ENCODE measurements at regions of chr5 and their contacts with region 1.

Region 1: GRCh38 chr5:64612344-64612961 is 77.8 kb upstream of the SHISAL2B start:
- DNase-seq: peak; percentile 71
- H3K4me3 Mint-ChIP-seq: no peak overlapping the region
- H3K27ac Mint-ChIP-seq: no peak overlapping the region
- H3K4me1 Mint-ChIP-seq: no peaks in the 10 kb centered on the region
- H3K27me3 Mint-ChIP-seq: peaks cover 33% of the 10 kb centered on the region
- CTCF ChIP-seq: peak; percentile 75

Region 2: DNA sequence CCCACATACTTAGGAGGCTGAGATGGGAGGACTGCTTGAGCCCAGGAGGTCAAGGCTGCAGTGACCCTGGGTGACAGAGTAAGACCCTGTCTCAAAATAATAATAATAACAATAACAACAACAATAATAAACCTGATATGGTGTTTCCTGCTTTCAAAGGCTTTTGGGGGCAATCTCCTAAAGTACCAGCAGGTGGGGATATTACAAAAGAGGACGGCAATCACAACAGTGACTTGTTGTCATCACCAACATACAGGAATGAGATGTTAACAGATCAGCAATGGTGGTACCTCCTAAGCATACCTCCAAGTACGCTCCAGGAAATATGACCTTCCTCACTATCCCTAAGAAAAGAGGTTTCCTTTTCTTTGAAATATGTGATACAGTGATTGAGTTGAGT is 537.9 kb before region 1 on chr5:
- CTCF ChIA-PET with region 1: interaction called, 4 read pairs
- POLR2A ChIA-PET with region 1: no interaction called
- intact Hi-C with region 1: loop called (anchors 1 kb)
- DNase-seq: peak; percentile 53
- H3K4me3 Mint-ChIP-seq: no peak overlapping the region
- H3K27ac Mint-ChIP-seq: no peak overlapping the region
- H3K4me1 Mint-ChIP-seq: no peaks in the 10 kb centered on the region
- H3K27me3 Mint-ChIP-seq: peaks cover 15% of the 10 kb centered on the region
- CTCF ChIP-seq: peak; percentile 62

Region 3: DNA sequence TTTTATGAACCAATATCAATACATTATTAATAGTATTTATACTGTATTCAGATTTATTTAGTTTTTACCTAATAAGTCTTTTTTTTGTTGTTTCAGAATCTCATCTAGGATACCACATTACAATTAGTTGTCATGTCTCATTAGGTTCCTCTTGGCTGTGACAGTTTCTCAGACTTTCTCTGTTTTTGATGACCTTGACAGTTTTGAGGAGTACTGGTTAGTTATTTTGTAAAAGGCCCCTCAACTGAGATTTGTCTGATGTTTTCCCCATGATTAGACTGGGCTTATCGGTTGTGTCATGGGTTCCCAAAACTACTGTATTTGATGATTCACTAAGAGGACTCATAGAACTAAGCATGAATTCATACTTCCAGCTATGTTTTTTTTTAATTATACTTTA is 390.5 kb before region 1 on chr5:
- CTCF ChIA-PET with region 1: interaction called, 19 read pairs
- POLR2A ChIA-PET with region 1: interaction called, 3 read pairs
- intact Hi-C with region 1: no loop called
- DNase-seq: no peak
- H3K4me3 Mint-ChIP-seq: no peak overlapping the region
- H3K27ac Mint-ChIP-seq: no peak overlapping the region
- H3K4me1 Mint-ChIP-seq: no peaks in the 10 kb centered on the region
- H3K27me3 Mint-ChIP-seq: no peaks in the 10 kb centered on the region
- CTCF ChIP-seq: no peak

Region 4: DNA sequence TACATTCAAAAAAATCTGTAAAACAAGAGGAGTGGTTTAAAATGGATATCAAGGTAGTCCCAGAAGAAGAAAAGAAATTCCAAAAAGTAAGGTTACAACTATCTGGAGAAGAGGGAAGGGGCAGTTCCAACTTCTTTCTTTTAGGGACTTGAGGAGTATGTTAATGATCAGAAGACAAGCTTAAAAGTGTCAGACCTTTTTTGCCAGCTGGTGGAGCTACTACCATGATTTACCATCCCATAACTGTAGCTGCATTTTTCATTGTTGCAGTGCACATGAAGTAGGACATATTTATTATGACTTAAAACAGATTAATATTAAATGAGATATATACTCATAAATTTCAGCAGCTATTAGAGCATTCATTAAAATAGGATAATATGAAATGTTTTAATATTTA is 265.1 kb before region 1 on chr5:
- CTCF ChIA-PET with region 1: interaction called, 48 read pairs
- POLR2A ChIA-PET with region 1: no interaction called
- intact Hi-C with region 1: loop called (anchors 1 kb)
- DNase-seq: peak; percentile 13
- H3K4me3 Mint-ChIP-seq: no peak overlapping the region
- H3K27ac Mint-ChIP-seq: no peak overlapping the region
- H3K4me1 Mint-ChIP-seq: no peaks in the 10 kb centered on the region
- H3K27me3 Mint-ChIP-seq: no peaks in the 10 kb centered on the region
- CTCF ChIP-seq: peak; percentile 21

Region 5: DNA sequence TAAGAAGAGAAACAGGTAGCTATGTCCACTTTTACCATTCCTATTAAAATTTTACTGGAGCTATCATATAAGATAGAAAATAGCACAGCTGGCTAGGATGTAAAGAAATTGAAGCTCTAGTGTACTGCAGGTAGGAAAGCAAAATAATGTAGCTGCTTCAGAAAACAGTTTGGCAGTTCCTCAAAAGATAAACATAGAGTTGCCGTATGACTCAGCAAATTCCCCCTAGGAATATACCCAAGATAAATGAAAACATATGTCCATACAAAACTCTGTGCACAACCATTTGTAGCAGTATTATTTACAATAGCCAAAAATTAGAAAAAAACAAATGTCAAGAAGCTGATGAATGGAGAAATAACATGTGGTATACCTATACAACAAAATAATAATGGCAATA is 13.2 kb after region 1 on chr5:
- CTCF ChIA-PET with region 1: interaction called, 16 read pairs
- POLR2A ChIA-PET with region 1: no interaction called
- intact Hi-C with region 1: no loop called
- DNase-seq: peak; percentile 34
- H3K4me3 Mint-ChIP-seq: no peak overlapping the region
- H3K27ac Mint-ChIP-seq: no peak overlapping the region
- H3K4me1 Mint-ChIP-seq: no peaks in the 10 kb centered on the region
- H3K27me3 Mint-ChIP-seq: peaks cover 9% of the 10 kb centered on the region
- CTCF ChIP-seq: no peak

Region 6: DNA sequence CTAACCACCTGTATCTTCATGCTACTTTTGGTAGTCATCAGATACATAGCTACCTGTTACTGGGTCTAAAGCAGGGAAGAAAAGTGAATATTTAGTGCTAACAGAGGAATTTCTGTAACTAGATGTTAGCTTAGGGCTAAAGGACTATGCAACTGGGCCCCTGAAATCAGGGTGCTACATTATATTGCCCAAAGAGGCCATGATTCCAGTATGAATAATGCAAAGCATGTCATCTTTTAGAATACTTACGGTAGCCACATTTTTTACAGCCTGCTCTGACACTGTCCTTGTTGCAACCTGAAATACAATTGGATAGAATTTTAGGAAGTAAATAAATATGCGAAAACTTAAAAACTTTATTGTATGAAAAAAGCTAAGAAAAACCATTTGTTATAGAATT is 141.6 kb after region 1 on chr5:
- CTCF ChIA-PET with region 1: no interaction called
- POLR2A ChIA-PET with region 1: no interaction called
- intact Hi-C with region 1: no loop called
- DNase-seq: no peak
- H3K4me3 Mint-ChIP-seq: no peak overlapping the region
- H3K27ac Mint-ChIP-seq: no peak overlapping the region
- H3K4me1 Mint-ChIP-seq: peaks cover 6% of the 10 kb centered on the region
- H3K27me3 Mint-ChIP-seq: no peaks in the 10 kb centered on the region
- CTCF ChIP-seq: no peak

Region 7: GRCh38 chr5:65157906-65158603 is 545.6 kb after region 1 on chr5:
- CTCF ChIA-PET with region 1: no interaction called
- POLR2A ChIA-PET with region 1: no interaction called
- intact Hi-C with region 1: no loop called
- DNase-seq: no peak
- H3K4me3 Mint-ChIP-seq: no peak overlapping the region
- H3K27ac Mint-ChIP-seq: peak overlapping the region; percentile 35
- H3K4me1 Mint-ChIP-seq: peaks cover 12% of the 10 kb centered on the region
- H3K27me3 Mint-ChIP-seq: no peaks in the 10 kb centered on the region
- CTCF ChIP-seq: no peak

Measured in MCF 10A (cell line).